B cell (primary cell): ENCODE measurements at regions of chr12 and their contacts with region 1.

Region 1: GRCh38 chr12:31603546-31604009 is 12.6 kb upstream of the DENND5B start:
- DNase-seq: peak; percentile 87
- ATAC-seq: peak; percentile 84
- H3K4me3 ChIP-seq: peak overlapping the region in 3 of 5 experiments; percentile 5 to 54 (median 9)
- H3K4me3 Mint-ChIP-seq: peak overlapping the region; percentile 47
- H3K27ac ChIP-seq: peak overlapping the region; percentile 61 to 67
- H3K27ac Mint-ChIP-seq: peak overlapping the region; percentile 81
- H3K4me1 ChIP-seq: peaks cover 46 to 56% of the 10 kb centered on the region in 2 donors
- H3K4me1 Mint-ChIP-seq: peaks cover 52% of the 10 kb centered on the region
- H3K27me3 ChIP-seq: no peaks in the 10 kb centered on the region
- H3K27me3 Mint-ChIP-seq: no peaks in the 10 kb centered on the region
- CTCF ChIP-seq: no peak

Region 2: GRCh38 chr12:31325877-31326631 is 277.5 kb before region 1 on chr12 and contains the start of gene SINHCAF:
- CTCF ChIA-PET with region 1: no interaction called
- POLR2A ChIA-PET with region 1: no interaction called
- intact Hi-C with region 1: loop called (anchors 1 kb)
- DNase-seq: peak; percentile 99
- ATAC-seq: peak; percentile 64
- H3K4me3 ChIP-seq: peak within 1 kb of the TSS; percentile 70 to 96 (median 93)
- H3K4me3 Mint-ChIP-seq: peak within 1 kb of the TSS; percentile 98
- H3K27ac ChIP-seq: peak within 1 kb of the TSS; percentile 97
- H3K27ac Mint-ChIP-seq: peak within 1 kb of the TSS; percentile 99
- H3K4me1 ChIP-seq: peaks cover 27 to 36% of the 10 kb centered on the region in 2 donors
- H3K4me1 Mint-ChIP-seq: peaks cover 39% of the 10 kb centered on the region
- H3K27me3 ChIP-seq: no peaks in the 10 kb centered on the region
- H3K27me3 Mint-ChIP-seq: no peaks in the 10 kb centered on the region
- CTCF ChIP-seq: no peak
- total RNA-seq, gene SINHCAF: 127 and 129 TPM in 2 replicates

Region 3: GRCh38 chr12:31423405-31423804 is 180.2 kb before region 1 on chr12:
- CTCF ChIA-PET with region 1: no interaction called
- POLR2A ChIA-PET with region 1: interaction called, 10 read pairs
- intact Hi-C with region 1: no loop called
- DNase-seq: no peak
- ATAC-seq: no peak
- H3K4me3 ChIP-seq: no peak overlapping the region
- H3K4me3 Mint-ChIP-seq: no peak overlapping the region
- H3K27ac ChIP-seq: no peak overlapping the region
- H3K27ac Mint-ChIP-seq: no peak overlapping the region
- H3K4me1 ChIP-seq: no peaks in the 10 kb centered on the region
- H3K4me1 Mint-ChIP-seq: peaks cover 4% of the 10 kb centered on the region
- H3K27me3 ChIP-seq: no peaks in the 10 kb centered on the region
- H3K27me3 Mint-ChIP-seq: no peaks in the 10 kb centered on the region
- CTCF ChIP-seq: no peak

Region 4: GRCh38 chr12:31578632-31579031 is 24.9 kb before region 1 on chr12:
- CTCF ChIA-PET with region 1: no interaction called
- POLR2A ChIA-PET with region 1: interaction called, 10 read pairs
- intact Hi-C with region 1: no loop called
- DNase-seq: no peak
- ATAC-seq: no peak
- H3K4me3 ChIP-seq: no peak overlapping the region
- H3K4me3 Mint-ChIP-seq: no peak overlapping the region
- H3K27ac ChIP-seq: peak overlapping the region in 1 of 2 donors; percentile 55
- H3K27ac Mint-ChIP-seq: peak overlapping the region; percentile 46
- H3K4me1 ChIP-seq: peaks cover 34 to 35% of the 10 kb centered on the region in 2 donors
- H3K4me1 Mint-ChIP-seq: peaks cover 59% of the 10 kb centered on the region
- H3K27me3 ChIP-seq: no peaks in the 10 kb centered on the region
- H3K27me3 Mint-ChIP-seq: no peaks in the 10 kb centered on the region
- CTCF ChIP-seq: no peak

Region 5: DNA sequence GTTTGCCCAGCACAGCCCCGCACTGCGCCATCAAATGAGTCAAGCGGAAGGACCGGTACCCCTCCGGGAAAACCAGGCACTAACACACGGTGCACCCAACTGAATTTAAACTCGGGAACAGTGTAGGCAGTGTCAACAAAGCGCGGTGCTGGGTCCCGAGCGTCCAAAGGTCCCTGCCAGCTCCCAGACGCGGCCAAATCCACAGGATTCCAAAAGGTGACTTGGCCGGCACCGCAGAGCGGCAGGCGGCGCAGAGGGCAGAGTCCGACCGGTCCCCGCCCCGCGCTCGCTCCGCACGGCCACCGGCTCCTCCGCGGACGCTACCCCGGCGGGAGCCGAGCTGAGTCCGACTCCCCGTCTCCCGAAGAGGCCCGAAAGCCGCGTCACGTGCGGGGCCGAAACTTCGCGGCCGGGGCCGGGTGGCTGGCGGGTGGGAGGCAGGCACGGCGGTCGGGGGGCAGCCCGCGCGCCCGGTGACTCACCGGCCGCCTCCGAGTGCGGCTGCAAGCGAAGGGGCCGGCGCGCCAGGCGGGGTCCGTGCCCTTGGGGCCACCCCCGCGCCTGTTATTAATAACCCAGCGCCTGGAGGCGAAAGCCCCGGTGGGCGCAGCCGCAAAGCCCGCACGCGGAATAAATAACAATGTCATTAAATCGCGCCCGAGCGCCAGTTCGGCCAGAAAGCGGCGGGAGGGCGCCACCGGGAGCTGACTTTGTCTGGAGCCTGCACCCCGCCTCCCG is 13.5 kb before region 1 on chr12:
- CTCF ChIA-PET with region 1: interaction called, 8 read pairs
- POLR2A ChIA-PET with region 1: interaction called, 23 read pairs
- intact Hi-C with region 1: loop called (anchors 1 kb)
- DNase-seq: peak; percentile 78
- ATAC-seq: peak; percentile 29
- H3K4me3 ChIP-seq: peak overlapping the region; percentile 65 to 95 (median 78)
- H3K4me3 Mint-ChIP-seq: peak overlapping the region; percentile 96
- H3K27ac ChIP-seq: peak overlapping the region; percentile 85 to 94
- H3K27ac Mint-ChIP-seq: peak overlapping the region; percentile 99
- H3K4me1 ChIP-seq: peaks cover 49 to 56% of the 10 kb centered on the region in 2 donors
- H3K4me1 Mint-ChIP-seq: peaks cover 59% of the 10 kb centered on the region
- H3K27me3 ChIP-seq: no peaks in the 10 kb centered on the region
- H3K27me3 Mint-ChIP-seq: no peaks in the 10 kb centered on the region
- CTCF ChIP-seq: no peak